ENCODE measurements at regions of chr19 and their contacts with region 1.

Region 1: DNA sequence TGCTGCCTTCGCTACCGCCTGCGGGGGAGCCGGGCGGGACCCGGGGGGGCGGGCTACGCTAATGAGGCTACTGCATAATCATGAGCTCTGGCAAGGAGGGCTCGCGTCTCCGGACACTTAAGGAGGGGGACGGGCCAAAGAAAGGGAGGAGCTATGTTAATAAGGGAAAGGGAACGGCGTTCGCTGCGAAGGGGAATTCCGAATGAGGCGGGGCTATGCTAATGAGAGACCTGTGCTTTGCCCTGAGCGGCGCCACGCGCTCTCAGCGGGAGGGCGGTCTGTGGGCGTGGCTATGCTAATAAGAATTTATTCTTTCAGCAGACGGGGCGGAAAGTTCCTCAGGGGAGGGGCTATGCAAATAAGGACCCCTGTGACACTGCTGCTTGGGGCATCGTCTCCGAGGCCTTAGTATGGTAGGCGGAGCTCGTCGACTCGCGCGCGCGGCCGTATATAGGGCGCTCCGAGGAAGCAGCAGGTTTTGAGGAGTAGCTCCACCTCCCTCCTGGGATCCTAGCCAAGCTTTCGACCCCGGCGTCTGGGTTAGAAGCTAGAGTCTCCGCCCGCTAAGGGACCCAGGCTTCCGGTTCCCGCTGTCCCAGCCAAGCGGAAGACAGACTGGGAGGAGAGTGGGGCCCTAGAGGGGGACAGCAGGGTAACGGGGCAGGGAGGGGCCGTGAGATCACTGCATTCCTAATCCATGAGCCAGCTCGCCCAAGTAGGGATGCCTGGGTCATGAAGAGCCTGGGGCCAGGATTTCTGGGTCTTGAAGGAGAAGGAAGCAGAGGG is at the start of gene RRAS:
- DNase-seq: peak; percentile 100
- H3K4me3 Mint-ChIP-seq: peak within 1 kb of the TSS; percentile 99
- H3K27ac Mint-ChIP-seq: peak within 1 kb of the TSS; percentile 100
- H3K4me1 Mint-ChIP-seq: peaks cover 50% of the 10 kb centered on the region
- H3K27me3 Mint-ChIP-seq: no peaks in the 10 kb centered on the region
- total RNA-seq, gene RRAS: 12.2 to 14.4 TPM

Region 2: DNA sequence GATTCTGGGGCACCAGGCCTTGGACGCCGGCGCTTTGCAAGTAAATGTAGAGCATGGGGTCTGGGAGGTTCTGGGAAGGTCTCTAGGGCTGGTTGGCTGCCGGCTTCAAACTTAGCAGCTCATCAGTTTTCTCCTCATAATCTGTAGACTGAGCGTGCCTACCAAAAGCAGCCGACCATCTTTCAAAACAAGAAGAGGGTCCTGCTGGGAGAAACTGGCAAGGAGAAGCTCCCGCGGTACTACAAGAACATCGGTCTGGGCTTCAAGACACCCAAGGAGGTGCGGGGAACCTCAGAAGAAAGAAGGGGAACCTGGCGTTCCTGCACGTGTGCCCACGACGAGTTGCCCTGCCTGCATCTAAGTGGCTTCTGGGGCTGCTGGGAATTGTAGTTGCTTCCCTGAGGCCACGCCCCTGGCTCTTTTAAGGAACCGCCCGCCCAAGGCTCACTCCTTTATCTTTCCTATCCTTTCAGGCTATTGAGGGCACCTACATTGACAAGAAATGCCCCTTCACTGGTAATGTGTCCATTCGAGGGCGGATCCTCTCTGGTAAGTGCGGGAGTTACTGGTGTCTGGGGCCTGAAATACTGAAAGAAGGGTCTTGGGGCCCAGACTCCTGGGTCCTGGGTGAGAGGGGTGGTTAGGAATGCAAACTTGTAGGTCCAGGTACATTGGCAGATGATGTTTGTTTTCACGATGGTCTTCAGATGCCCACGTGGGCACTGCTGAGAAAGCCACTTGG is 143.1 kb before region 1 on chr19:
- CTCF ChIA-PET with region 1: no interaction called
- POLR2A ChIA-PET with region 1: no interaction called
- intact Hi-C with region 1: loop called (anchors 1 kb)
- DNase-seq: peak; percentile 83
- H3K4me3 Mint-ChIP-seq: peak overlapping the region; percentile 92
- H3K27ac Mint-ChIP-seq: peak overlapping the region; percentile 97
- H3K4me1 Mint-ChIP-seq: peaks cover 49% of the 10 kb centered on the region
- H3K27me3 Mint-ChIP-seq: no peaks in the 10 kb centered on the region

Region 3: DNA sequence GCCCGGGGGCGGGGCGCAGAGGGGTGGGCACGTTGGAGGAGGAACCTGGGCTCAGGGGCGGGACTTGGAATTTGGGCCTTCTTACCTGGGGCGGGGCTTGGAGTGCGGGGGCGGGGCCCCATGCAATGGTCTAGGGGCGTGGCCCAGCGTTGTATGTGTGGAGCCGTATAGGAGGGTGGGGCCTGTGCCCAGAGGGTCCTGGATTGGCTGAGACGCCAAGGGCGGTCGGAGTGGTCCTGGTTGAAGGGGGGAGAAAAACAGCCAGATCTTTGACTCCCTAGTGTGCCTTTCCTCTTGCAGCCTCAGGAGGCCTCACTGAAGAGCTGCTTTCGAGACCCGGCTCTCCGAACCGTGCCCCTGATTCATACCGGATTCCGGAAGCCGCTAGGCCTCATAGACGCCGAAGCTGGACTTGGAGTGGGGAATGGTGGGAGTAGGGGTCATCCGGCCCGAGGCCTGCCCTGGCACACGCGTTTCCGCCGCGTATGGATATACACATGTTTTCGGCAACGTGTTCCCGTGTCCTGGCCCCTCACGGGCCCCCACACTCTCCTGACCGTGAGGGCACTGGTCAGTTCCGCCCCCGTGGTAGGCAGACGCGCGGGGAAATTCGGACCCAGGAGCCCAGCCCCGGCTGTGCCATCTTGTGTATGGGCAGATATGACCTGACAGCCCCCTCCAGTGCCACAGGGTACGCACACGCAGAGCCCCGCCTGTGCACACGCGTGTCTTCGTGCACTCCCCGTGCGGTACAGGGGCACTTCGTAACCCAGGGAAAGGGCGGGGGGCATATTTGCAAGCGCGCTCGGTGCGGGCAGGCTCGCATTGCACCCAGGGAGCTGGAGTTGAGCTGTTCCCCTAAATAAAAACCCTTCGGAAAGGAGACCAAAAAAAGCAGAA is 50.0 kb before region 1 on chr19:
- CTCF ChIA-PET with region 1: interaction called, 4 read pairs
- POLR2A ChIA-PET with region 1: interaction called, 10 read pairs
- intact Hi-C with region 1: loop called (anchors 1 kb)
- DNase-seq: peak; percentile 97
- H3K4me3 Mint-ChIP-seq: peak overlapping the region; percentile 80
- H3K27ac Mint-ChIP-seq: peak overlapping the region; percentile 91
- H3K4me1 Mint-ChIP-seq: peaks cover 32% of the 10 kb centered on the region
- H3K27me3 Mint-ChIP-seq: no peaks in the 10 kb centered on the region

Region 4: GRCh38 chr19:49766007-49766937 is 126.0 kb after region 1 on chr19:
- CTCF ChIA-PET with region 1: no interaction called
- POLR2A ChIA-PET with region 1: interaction called, 5 read pairs
- intact Hi-C with region 1: loop called (anchors 2 kb)
- DNase-seq: peak; percentile 100
- H3K4me3 Mint-ChIP-seq: peak overlapping the region; percentile 96
- H3K27ac Mint-ChIP-seq: peak overlapping the region; percentile 95
- H3K4me1 Mint-ChIP-seq: peaks cover 33% of the 10 kb centered on the region
- H3K27me3 Mint-ChIP-seq: no peaks in the 10 kb centered on the region

Region 5: GRCh38 chr19:49869441-49870176 is 229.3 kb after region 1 on chr19:
- CTCF ChIA-PET with region 1: no interaction called
- POLR2A ChIA-PET with region 1: no interaction called
- intact Hi-C with region 1: loop called (anchors 2 kb)
- DNase-seq: peak; percentile 96
- H3K4me3 Mint-ChIP-seq: no peak overlapping the region
- H3K27ac Mint-ChIP-seq: no peak overlapping the region
- H3K4me1 Mint-ChIP-seq: peaks cover 50% of the 10 kb centered on the region
- H3K27me3 Mint-ChIP-seq: no peaks in the 10 kb centered on the region